ENCODE measurements at regions of chr2 and their contacts with region 1.

Region 1: GRCh38 chr2:148989882-148990493 is 48.5 kb upstream of the LYPD6B start:
- DNase-seq: peak; percentile 72
- CTCF ChIP-seq: peak; percentile 61

Region 2: GRCh38 chr2:148552675-148553331 is 437.2 kb before region 1 on chr2:
- in situ Hi-C with region 1: loop called (anchors 25 kb)
- DNase-seq: no peak
- CTCF ChIP-seq: no peak

Measured in GM13976 (cell line).